Psoas muscle (tissue), 8 donors: ENCODE measurements at regions of chr9 and their contacts with region 1.

Region 1: GRCh38 chr9:96818535-96818934 is 35.8 kb downstream of the ZNF782 start:
- DNase-seq: no peak
- ATAC-seq: no peak
- H3K4me3 ChIP-seq: no peak overlapping the region
- H3K27ac ChIP-seq: no peak overlapping the region
- H3K4me1 ChIP-seq: no peaks in the 10 kb centered on the region
- H3K27me3 ChIP-seq: no peaks in the 10 kb centered on the region
- CTCF ChIP-seq: no peak

Region 2: DNA sequence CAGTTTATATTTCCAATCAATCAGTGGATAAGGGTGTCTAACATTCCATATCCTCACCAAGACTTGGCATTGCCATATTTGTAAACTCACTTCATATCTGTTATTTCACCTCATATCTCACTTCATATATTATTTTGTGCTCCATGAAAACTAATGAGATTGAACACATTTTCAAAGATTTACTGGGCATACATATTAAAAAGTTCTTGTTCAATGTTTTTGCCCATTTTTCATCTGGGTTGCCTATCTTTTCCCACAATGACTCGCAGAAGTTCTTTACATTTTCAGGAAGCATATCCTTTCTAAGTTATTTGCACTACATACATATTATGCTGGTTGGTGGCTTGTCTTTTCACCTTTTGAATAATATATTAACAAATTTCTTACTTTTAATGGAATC is 56.0 kb before region 1 on chr9:
- intact Hi-C with region 1: loop called in 1 of 2 experiments (anchors 10 kb)
- DNase-seq: no peak
- ATAC-seq: no peak
- H3K4me3 ChIP-seq: no peak overlapping the region
- H3K27ac ChIP-seq: no peak overlapping the region
- H3K4me1 ChIP-seq: no peaks in the 10 kb centered on the region
- H3K27me3 ChIP-seq: no peaks in the 10 kb centered on the region
- CTCF ChIP-seq: no peak

Region 3: GRCh38 chr9:97543565-97543964 is 725.0 kb after region 1 on chr9:
- intact Hi-C with region 1: no loop called
- DNase-seq: no peak
- ATAC-seq: peak in 1 of 4 donors; percentile 40
- H3K4me3 ChIP-seq: no peak overlapping the region
- H3K27ac ChIP-seq: no peak overlapping the region
- H3K4me1 ChIP-seq: peaks cover 7% of the 10 kb centered on the region
- H3K27me3 ChIP-seq: no peaks in the 10 kb centered on the region
- CTCF ChIP-seq: no peak